Activated T-helper 1 cell treated with anti-CD3 and anti-CD28 coated beads, Interleukin-12 subunit alpha, Interleukin-12 subunit beta, Interleukin-2, Interleukin-4 antibody, amounts not matched to agents 30 ng/mL and 10 ng/mL and 1 ng/mL, durations not matched to agents 14 hours and 24 hours and 36 hours (primary cell): ENCODE measurements at regions of chr17 and their contacts with region 1.

Region 1: GRCh38 chr17:36486204-36487194 is at the start of gene ZNHIT3:
- DNase-seq: peak; percentile 90
- H3K4me3 Mint-ChIP-seq: peak within 1 kb of the TSS; percentile 100
- H3K27ac Mint-ChIP-seq: peak within 1 kb of the TSS; percentile 99
- H3K4me1 Mint-ChIP-seq: peaks cover 50% of the 10 kb centered on the region
- H3K27me3 Mint-ChIP-seq: peaks cover 10% of the 10 kb centered on the region
- total RNA-seq, gene ZNHIT3: 46.2 and 50.5 TPM in 2 replicates

Region 2: DNA sequence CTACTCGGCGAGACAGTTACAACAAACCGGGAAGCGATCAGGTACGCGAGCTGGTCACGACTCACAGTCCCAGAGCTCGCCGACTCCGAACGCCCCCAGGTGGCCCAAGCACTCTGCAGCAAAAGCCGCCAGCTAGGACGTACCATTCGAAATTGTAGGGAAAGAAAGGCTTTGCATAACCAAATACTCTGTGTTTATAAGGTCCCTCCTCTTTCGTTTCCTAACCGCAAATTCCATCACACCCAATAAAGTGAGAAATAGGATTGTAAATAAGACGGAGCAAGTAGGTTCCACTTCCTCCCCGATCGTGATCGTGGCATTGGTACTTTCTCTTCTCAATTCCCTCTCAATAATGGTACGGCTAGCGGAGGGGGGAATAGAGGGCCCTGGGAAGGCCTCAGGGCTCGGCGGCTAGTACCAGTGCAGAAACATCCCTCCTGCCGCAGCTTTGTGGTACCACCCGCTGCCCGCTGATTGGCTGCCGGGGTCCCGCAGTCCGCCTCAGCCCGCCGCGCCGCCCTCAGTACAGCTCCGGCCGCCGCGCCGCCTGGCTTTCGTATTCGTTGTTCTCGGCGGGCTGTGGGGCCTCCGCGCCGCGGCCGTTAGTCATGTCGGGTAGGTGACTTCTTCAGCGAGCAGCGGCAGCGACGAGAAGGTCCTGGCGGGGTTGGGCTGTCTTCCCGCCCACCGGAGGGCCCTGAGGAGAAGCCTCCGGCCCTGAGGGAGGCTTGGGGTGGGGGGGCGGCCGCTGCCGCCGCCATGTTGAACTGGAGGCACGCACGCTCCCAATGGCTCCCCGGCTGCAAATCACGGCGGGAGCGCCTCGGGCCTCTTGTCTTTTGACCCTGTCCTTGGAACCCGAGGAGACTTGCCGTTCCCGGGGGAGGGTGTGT is 677.3 kb before region 1 on chr17 and contains the start of gene TAF15:
- intact Hi-C with region 1: loop called (anchors 5 kb)
- DNase-seq: peak; percentile 95
- H3K4me3 Mint-ChIP-seq: peak within 1 kb of the TSS; percentile 98
- H3K27ac Mint-ChIP-seq: peak within 1 kb of the TSS; percentile 99
- H3K4me1 Mint-ChIP-seq: peaks cover 67% of the 10 kb centered on the region
- H3K27me3 Mint-ChIP-seq: no peaks in the 10 kb centered on the region
- total RNA-seq, gene TAF15: 311 and 322 TPM in 2 replicates

Region 3: GRCh38 chr17:35969558-35970380 is 516.7 kb before region 1 on chr17:
- intact Hi-C with region 1: loop called (anchors 1 kb)
- DNase-seq: peak; percentile 61
- H3K4me3 Mint-ChIP-seq: no peak overlapping the region
- H3K27ac Mint-ChIP-seq: no peak overlapping the region
- H3K4me1 Mint-ChIP-seq: no peaks in the 10 kb centered on the region
- H3K27me3 Mint-ChIP-seq: peaks cover 12% of the 10 kb centered on the region

Region 4: DNA sequence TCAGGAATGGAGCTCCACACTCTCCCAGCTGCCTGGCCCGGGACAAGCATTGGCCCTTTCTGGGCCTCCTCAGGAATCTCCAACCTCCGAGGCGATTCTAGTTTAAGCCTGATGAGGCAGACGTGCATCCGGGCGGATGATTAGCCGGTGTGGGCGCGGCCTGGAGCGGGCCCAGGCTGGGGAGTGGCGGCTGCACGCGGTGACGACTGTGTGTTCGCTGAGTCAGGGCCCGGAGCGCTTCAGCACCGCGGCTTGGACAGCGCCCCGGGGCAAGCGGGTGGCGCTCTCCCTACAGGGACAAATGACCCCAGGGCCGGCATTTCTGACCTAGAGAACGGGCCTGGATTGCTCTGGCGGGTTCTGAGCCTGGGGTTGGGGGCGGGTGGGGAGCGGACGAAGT is 22.6 kb before region 1 on chr17:
- intact Hi-C with region 1: loop called (anchors 1 kb)
- DNase-seq: peak; percentile 59
- H3K4me3 Mint-ChIP-seq: no peak overlapping the region
- H3K27ac Mint-ChIP-seq: no peak overlapping the region
- H3K4me1 Mint-ChIP-seq: no peaks in the 10 kb centered on the region
- H3K27me3 Mint-ChIP-seq: peaks cover 28% of the 10 kb centered on the region

Region 5: GRCh38 chr17:36534840-36535668 is 48.6 kb after region 1 on chr17 and contains the starts of genes MYO19 and PIGW:
- intact Hi-C with region 1: loop called (anchors 1 kb)
- DNase-seq: peak; percentile 86
- H3K4me3 Mint-ChIP-seq: peak within 1 kb of the TSS; percentile 98
- H3K27ac Mint-ChIP-seq: peak within 1 kb of the TSS; percentile 99
- H3K4me1 Mint-ChIP-seq: peaks cover 39% of the 10 kb centered on the region
- H3K27me3 Mint-ChIP-seq: no peaks in the 10 kb centered on the region
- total RNA-seq, gene MYO19: 159 and 165 TPM in 2 replicates
- total RNA-seq, gene PIGW: 29.4 and 30.8 TPM in 2 replicates

Region 6: DNA sequence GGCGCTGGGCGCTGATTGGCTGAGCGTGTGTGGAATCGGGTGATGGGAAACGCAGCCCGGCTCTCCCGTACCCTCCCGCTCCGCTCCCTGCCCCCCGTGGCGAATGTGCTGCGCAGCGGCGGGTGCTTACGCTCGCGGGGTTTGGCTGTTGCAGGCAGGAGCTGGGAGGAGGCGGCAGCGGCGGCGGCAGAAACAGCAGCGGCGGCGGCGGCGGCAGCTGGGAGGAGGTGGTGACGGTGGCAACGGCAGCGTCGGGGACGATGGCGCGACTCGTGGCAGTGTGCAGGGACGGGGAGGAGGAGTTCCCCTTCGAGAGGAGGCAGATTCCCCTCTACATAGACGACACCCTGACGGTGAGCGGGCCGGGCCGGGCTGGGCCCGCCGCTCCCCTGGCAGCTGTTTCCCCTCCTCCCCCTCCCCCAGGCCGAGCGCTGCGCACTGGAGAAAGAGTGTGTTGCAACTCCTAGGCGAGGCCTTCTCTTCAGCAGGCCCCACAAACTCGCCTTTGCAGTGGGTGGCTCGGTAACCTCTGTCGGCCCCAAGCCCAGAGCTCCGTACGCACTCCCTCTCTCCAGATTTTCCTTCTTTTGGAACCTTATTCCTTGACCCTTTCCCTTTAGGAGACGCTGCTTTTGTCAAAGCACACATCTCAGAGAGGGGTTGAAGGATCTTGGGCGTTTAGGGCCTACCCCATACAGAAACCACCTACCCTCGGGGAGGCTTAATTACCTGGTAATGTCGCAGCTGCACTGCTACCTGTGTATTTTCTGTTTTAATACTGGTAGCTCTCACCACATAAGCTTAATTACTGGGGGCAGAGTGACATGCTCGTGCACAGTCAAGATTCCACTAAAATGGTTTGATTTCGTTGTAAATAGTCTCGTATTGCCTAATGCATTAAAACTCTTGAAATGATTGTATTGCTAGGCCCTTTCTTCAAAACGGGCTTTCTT is 59.2 kb after region 1 on chr17:
- intact Hi-C with region 1: loop called (anchors 1 kb)
- DNase-seq: peak; percentile 95
- H3K4me3 Mint-ChIP-seq: peak overlapping the region; percentile 87
- H3K27ac Mint-ChIP-seq: peak overlapping the region; percentile 92
- H3K4me1 Mint-ChIP-seq: peaks cover 36% of the 10 kb centered on the region
- H3K27me3 Mint-ChIP-seq: no peaks in the 10 kb centered on the region

Region 7: GRCh38 chr17:36591434-36592315 is 105.2 kb after region 1 on chr17 and contains the start of gene DHRS11:
- intact Hi-C with region 1: loop called (anchors 2 kb)
- DNase-seq: peak; percentile 74
- H3K4me3 Mint-ChIP-seq: peak within 1 kb of the TSS; percentile 85
- H3K27ac Mint-ChIP-seq: peak within 1 kb of the TSS; percentile 65
- H3K4me1 Mint-ChIP-seq: peaks cover 28% of the 10 kb centered on the region
- H3K27me3 Mint-ChIP-seq: no peaks in the 10 kb centered on the region
- total RNA-seq, gene DHRS11: 15.9 and 16.4 TPM in 2 replicates